Astrocyte of the cerebellum (primary cell): ENCODE measurements at regions of chr13 and their contacts with region 1.

Region 1: GRCh38 chr13:26996965-26997752 is 174.5 kb downstream of the USP12 start:
- DNase-seq: no peak
- H3K4me3 ChIP-seq: no peak overlapping the region
- CTCF ChIP-seq: no peak

Region 2: DNA sequence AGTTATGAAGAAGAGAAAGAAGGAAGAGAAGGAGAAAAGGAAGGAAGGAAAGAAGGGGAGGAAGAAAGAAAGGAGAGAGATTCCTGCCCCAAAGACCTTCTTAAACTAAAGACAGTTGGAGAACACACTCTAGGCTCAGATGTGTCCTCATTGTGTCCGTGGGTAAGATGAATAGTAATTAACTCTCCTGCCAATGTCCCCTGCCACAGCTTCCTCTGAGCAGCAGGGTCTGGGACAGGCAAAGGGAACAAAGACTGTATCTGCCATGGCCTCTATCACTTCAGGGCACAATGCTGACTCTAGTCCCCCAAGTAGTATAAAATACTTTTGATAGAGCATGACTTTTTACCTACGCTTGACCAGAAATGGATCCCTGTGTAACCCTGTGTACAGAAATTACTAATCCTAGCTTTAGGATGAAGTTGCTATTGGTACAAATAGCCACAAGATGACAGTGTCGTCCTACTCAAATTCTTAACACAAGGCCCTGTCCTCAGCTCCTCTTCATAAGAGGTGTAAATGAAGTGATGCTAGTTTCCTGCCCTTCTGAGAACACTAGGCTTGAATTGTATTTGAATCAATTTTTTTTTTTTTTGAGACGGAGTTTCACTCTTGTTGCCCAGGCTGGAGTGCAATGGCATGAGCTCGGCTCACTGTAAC is 50.3 kb before region 1 on chr13:
- in situ Hi-C with region 1: loop called (anchors 5 kb)
- DNase-seq: peak; percentile 28
- H3K4me3 ChIP-seq: no peak overlapping the region
- CTCF ChIP-seq: peak; percentile 63

Region 3: DNA sequence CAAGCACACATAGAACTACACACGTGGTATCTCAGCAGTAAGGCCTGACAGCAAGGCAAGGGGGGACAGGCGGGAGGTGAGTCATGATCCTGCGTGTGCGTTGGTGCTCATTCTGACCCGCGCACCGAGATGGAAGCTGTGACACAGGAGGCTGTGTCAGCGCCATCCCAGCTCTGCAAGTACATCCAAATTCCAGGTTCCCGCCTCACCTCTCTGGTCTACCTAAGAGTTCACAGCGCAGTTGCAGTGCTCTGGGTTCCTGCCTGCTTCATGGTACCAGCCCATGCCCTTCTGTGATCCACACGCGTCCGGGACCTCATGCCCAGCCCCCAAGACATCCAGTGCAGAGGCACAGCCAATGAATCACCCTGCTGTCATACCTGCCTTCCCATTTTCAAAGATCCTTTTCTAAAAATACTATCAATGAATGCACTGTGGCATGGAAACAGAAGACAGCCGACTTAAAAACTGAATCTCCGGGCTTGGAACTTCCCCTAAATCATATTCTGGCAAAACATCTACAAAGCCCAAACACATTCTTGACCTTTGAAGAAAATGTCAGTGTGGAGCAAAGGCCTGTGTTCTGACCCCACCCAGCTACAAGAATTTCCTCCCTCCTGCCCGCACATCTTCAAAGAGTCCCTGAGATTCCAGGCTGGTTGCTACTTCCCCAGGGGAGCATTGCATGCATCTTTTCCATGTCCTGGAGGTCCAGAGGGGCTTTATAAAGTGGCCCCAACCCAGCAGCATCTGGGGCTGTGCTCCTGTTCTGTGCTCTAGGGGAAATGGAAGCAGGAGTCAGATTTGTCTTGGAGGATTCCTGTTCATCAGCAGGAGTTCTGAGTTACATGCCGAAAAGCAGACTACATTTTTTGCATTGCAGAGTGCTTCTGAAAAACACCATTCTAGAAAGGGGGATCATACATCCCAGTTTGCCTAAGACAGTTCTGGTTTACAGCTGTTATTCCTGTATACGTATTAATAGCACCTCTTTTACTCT is 39.1 kb after region 1 on chr13:
- in situ Hi-C with region 1: loop called (anchors 5 kb)
- DNase-seq: no peak
- H3K4me3 ChIP-seq: no peak overlapping the region
- CTCF ChIP-seq: no peak

Region 4: DNA sequence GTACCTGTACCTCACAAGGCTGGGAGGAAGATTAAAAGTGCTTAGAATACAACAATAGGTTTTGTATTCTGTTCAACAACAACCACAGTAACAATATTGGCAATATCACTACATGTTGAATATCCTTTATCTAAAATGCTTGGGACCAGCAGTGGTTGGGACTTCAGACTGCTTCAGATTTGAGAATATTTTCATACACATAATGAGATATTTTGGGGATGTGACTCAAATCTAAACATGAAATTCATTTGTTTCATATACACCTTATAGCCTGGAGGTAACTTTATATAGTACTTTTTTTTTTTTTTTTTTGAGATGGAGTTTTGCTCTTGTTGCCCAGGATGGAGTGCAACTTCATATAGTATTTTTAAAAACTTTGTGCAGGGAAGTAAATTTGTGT is 100.5 kb after region 1 on chr13:
- in situ Hi-C with region 1: loop called (anchors 5 kb)
- DNase-seq: no peak
- H3K4me3 ChIP-seq: no peak overlapping the region
- CTCF ChIP-seq: no peak